ENCODE measurements at regions of chr2 and their contacts with region 1.

Region 1: DNA sequence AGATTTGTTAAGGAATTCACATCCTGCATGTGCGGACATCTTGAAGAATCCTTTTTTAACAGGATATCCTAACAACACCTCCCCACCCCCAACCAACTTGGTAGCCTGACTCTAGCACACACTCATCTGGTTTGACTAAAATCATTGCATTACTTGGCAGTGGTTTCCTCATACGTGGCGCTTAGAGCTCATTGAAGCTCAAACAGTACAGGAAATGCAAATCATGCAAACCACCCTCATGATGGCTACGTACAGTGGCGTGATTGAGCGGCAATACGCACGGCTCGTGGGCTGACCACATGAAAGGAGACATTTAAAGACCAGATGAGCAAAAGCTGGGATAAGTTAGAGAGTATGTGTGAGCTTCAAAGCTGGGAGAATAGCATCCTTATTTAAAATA is 336.2 kb downstream of the ZEB2 start:
- DNase-seq: peak; percentile 76
- H3K4me3 Mint-ChIP-seq: peak overlapping the region; percentile 44
- H3K27ac Mint-ChIP-seq: peak overlapping the region; percentile 94
- H3K4me1 Mint-ChIP-seq: peaks cover 56% of the 10 kb centered on the region
- H3K27me3 Mint-ChIP-seq: no peaks in the 10 kb centered on the region

Region 2: GRCh38 chr2:144084114-144084661 is 99.5 kb before region 1 on chr2:
- intact Hi-C with region 1: loop called (anchors 5 kb)
- DNase-seq: no peak
- H3K4me3 Mint-ChIP-seq: no peak overlapping the region
- H3K27ac Mint-ChIP-seq: peak overlapping the region; percentile 23
- H3K4me1 Mint-ChIP-seq: peaks cover 31% of the 10 kb centered on the region
- H3K27me3 Mint-ChIP-seq: no peaks in the 10 kb centered on the region

Region 3: GRCh38 chr2:144132357-144132756 is 51.4 kb before region 1 on chr2:
- intact Hi-C with region 1: loop called (anchors 1 kb)
- DNase-seq: no peak
- H3K4me3 Mint-ChIP-seq: no peak overlapping the region
- H3K27ac Mint-ChIP-seq: no peak overlapping the region
- H3K4me1 Mint-ChIP-seq: peaks cover 31% of the 10 kb centered on the region
- H3K27me3 Mint-ChIP-seq: no peaks in the 10 kb centered on the region

Region 4: DNA sequence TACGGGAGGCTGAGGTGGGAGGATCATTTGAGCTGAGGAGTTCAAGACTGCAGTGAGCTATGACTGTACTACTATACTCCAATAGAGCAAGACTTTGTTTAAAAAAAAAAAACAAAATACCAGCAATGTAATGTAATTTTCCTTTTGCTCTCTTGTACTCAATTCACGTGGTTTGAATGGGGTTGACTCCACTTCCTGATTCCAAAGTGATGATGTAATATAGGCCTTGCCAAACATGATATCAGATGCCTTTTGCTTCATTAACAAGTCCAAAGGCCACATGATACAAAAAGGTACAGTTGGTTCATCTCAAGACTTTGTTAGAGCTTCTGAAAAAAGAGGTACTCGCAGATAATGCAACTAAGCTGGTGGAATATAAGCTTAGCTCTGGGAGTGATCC is 14.4 kb after region 1 on chr2:
- intact Hi-C with region 1: loop called (anchors 2 kb)
- DNase-seq: no peak
- H3K4me3 Mint-ChIP-seq: no peak overlapping the region
- H3K27ac Mint-ChIP-seq: peak overlapping the region; percentile 82
- H3K4me1 Mint-ChIP-seq: peaks cover 58% of the 10 kb centered on the region
- H3K27me3 Mint-ChIP-seq: no peaks in the 10 kb centered on the region

Region 5: GRCh38 chr2:144215701-144216675 is 32.3 kb after region 1 on chr2:
- intact Hi-C with region 1: loop called (anchors 2 kb)
- DNase-seq: no peak
- H3K4me3 Mint-ChIP-seq: peak overlapping the region; percentile 40
- H3K27ac Mint-ChIP-seq: peak overlapping the region; percentile 94
- H3K4me1 Mint-ChIP-seq: peaks cover 46% of the 10 kb centered on the region
- H3K27me3 Mint-ChIP-seq: no peaks in the 10 kb centered on the region

Region 6: GRCh38 chr2:144240587-144241339 is 57.0 kb after region 1 on chr2:
- intact Hi-C with region 1: no loop called
- DNase-seq: no peak
- H3K4me3 Mint-ChIP-seq: no peak overlapping the region
- H3K27ac Mint-ChIP-seq: peak overlapping the region; percentile 82
- H3K4me1 Mint-ChIP-seq: peaks cover 65% of the 10 kb centered on the region
- H3K27me3 Mint-ChIP-seq: no peaks in the 10 kb centered on the region

Region 7: GRCh38 chr2:144256996-144257707 is 73.4 kb after region 1 on chr2:
- intact Hi-C with region 1: loop called (anchors 5 kb)
- DNase-seq: no peak
- H3K4me3 Mint-ChIP-seq: no peak overlapping the region
- H3K27ac Mint-ChIP-seq: peak overlapping the region; percentile 75
- H3K4me1 Mint-ChIP-seq: peaks cover 33% of the 10 kb centered on the region
- H3K27me3 Mint-ChIP-seq: no peaks in the 10 kb centered on the region